ENCODE measurements at regions of chr3 and their contacts with region 1.

Region 1: GRCh38 chr3:4776980-4777581 is 202.2 kb upstream of the BHLHE40 start:
- DNase-seq: peak; percentile 80
- H3K4me3 Mint-ChIP-seq: peak overlapping the region; percentile 60
- H3K27ac Mint-ChIP-seq: peak overlapping the region; percentile 97
- H3K4me1 Mint-ChIP-seq: peaks cover 59% of the 10 kb centered on the region
- H3K27me3 Mint-ChIP-seq: no peaks in the 10 kb centered on the region

Region 2: DNA sequence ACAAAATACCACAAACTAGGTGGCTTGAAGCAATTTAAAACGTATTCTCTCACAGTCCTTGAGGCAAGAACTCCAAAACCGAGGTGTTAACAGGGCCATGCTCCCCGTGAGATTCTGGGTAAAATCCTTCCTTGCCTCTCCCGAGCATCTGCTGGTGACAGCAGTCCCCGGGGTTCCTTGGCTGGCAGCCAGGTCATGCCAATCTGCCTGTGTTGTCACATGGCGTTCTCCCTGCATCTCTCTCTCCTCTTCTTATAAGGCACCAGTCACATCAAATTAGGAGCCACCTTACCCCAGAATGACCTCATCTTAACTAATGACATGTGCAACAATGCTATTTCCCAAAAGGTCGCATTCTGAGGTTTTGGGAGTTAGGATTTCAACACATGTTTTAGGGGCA is 1004.2 kb before region 1 on chr3:
- intact Hi-C with region 1: no loop called
- DNase-seq: no peak
- H3K4me3 Mint-ChIP-seq: no peak overlapping the region
- H3K27ac Mint-ChIP-seq: no peak overlapping the region
- H3K4me1 Mint-ChIP-seq: no peaks in the 10 kb centered on the region
- H3K27me3 Mint-ChIP-seq: no peaks in the 10 kb centered on the region

Region 3: GRCh38 chr3:4387210-4388204 is 389.6 kb before region 1 on chr3:
- intact Hi-C with region 1: loop called (anchors 10 kb)
- DNase-seq: peak; percentile 48
- H3K4me3 Mint-ChIP-seq: peak overlapping the region; percentile 1
- H3K27ac Mint-ChIP-seq: peak overlapping the region; percentile 84
- H3K4me1 Mint-ChIP-seq: peaks cover 35% of the 10 kb centered on the region
- H3K27me3 Mint-ChIP-seq: no peaks in the 10 kb centered on the region

Region 4: GRCh38 chr3:4633078-4634004 is 143.7 kb before region 1 on chr3:
- intact Hi-C with region 1: no loop called
- DNase-seq: peak; percentile 71
- H3K4me3 Mint-ChIP-seq: no peak overlapping the region
- H3K27ac Mint-ChIP-seq: no peak overlapping the region
- H3K4me1 Mint-ChIP-seq: peaks cover 5% of the 10 kb centered on the region
- H3K27me3 Mint-ChIP-seq: no peaks in the 10 kb centered on the region

Region 5: GRCh38 chr3:4741404-4742307 is 35.4 kb before region 1 on chr3:
- intact Hi-C with region 1: loop called (anchors 1 kb)
- DNase-seq: peak; percentile 71
- H3K4me3 Mint-ChIP-seq: peak overlapping the region; percentile 47
- H3K27ac Mint-ChIP-seq: peak overlapping the region; percentile 89
- H3K4me1 Mint-ChIP-seq: peaks cover 66% of the 10 kb centered on the region
- H3K27me3 Mint-ChIP-seq: no peaks in the 10 kb centered on the region

Region 6: DNA sequence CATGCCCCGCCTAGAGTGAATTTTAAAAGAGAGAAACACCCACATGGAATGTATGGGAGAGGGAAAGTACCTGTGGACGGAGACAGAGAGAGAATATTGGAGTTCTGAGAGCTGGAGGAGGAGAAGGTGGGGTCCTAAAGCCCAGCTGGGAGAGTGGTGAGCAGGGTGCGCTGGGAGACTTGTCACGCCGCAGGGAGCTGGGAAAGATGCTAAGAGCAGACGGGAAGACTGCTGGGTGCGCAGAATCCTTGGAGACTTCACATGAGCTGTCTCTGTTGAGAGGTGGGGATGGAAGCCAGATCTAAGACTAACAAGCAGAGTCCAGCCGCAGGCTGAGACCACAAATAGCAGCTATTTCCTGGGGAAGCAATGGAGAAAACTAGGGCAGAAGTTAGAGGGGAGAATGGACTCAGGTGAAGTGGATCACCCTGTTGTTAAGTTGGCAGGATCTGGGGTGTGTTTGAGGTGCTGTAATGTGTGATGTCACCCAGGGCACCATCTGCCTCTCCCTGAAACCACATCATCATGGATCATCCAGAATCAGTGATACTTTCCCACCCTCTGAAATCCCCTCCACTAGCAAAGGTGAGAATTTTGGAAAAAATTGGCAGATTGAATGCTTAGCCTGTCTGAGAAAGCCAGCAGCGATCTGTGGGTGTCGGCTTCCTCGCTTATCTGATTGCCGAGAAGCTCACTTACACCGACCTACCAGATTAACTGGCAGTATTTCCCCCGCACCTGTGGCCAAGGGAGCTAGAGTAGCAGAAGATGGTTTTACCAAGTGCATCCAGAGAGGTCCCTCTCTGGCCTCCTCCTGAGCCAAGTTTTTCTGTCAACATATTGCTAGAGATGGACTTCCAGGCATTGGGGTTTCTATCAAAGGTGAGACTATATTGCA is 27.3 kb after region 1 on chr3:
- intact Hi-C with region 1: loop called (anchors 1 kb)
- DNase-seq: peak; percentile 64
- H3K4me3 Mint-ChIP-seq: peak overlapping the region; percentile 30
- H3K27ac Mint-ChIP-seq: peak overlapping the region; percentile 50
- H3K4me1 Mint-ChIP-seq: peaks cover 53% of the 10 kb centered on the region
- H3K27me3 Mint-ChIP-seq: no peaks in the 10 kb centered on the region

Region 7: DNA sequence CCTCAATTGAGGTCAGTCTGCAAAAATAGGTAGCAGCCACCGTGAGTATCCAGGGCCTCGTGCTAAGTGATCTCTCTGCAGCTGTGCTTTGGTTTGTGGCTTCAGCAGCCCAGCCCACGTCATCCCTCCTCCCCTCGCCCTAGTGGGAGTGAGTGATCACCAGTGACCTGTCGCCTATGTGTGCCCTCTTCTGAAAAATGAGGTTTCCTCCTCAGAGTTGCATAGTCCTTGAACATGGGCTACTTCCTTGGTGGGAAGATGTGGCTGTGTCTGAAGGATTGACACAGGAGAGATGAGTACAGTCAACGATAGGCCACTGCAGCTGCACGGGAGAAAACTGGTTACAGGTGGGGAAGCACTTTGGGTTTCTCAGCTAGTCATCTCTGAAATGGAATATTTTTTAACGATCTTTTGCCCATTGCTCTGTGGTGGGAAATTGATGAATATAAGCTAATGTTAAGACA is 57.4 kb after region 1 on chr3:
- intact Hi-C with region 1: loop called (anchors 1 kb)
- DNase-seq: peak; percentile 94
- H3K4me3 Mint-ChIP-seq: peak overlapping the region; percentile 81
- H3K27ac Mint-ChIP-seq: peak overlapping the region; percentile 97
- H3K4me1 Mint-ChIP-seq: peaks cover 83% of the 10 kb centered on the region
- H3K27me3 Mint-ChIP-seq: no peaks in the 10 kb centered on the region

Region 8: GRCh38 chr3:4906107-4906621 is 129.1 kb after region 1 on chr3:
- intact Hi-C with region 1: loop called (anchors 5 kb)
- DNase-seq: peak; percentile 71
- H3K4me3 Mint-ChIP-seq: peak overlapping the region; percentile 60
- H3K27ac Mint-ChIP-seq: peak overlapping the region; percentile 88
- H3K4me1 Mint-ChIP-seq: peaks cover 77% of the 10 kb centered on the region
- H3K27me3 Mint-ChIP-seq: no peaks in the 10 kb centered on the region

Region 9: DNA sequence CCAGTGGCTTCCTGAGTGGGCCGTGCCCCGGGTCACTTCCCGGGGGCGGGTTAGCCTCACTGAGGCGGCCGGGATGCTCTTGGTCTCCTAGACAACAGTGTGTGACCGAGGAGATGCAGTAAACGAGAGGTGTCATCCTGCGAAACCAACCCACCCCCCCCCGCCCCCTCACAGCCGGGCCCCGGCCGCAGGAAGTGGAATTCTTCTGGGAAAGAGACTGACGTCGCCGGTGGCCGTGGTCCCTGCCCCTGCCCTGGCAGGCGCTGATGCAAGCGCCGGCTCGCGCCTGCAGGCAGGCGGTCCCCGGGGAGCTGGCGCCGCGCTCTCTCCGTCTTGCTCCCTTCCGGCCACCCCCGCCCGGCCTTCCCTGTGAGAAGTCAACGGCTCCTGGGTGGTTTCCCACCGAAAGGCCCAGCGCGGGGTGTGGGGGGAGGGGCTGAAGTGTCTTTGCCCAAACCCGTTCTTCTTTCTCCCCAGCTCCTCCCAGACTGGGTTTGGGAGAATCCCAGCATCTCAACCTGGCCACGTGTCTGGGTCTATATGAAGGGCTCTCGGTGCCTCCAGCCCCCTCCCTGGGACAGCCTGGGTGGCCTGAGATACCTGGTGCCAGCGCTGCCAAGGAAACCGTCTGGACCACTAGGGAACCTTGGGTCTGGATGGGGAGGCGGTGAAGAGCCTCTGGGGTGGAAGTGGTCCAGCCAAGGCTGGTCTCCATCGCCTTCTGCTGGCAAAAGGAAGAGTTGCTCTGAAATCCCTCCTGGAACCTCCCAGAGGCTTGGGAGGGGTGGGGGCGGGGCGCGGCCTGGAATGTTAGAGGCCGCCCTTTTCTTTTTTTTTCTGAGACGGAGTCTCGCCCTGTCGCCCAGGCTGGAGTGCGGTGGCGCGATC is 249.5 kb after region 1 on chr3:
- intact Hi-C with region 1: loop called (anchors 1 kb)
- DNase-seq: peak; percentile 90
- H3K4me3 Mint-ChIP-seq: peak overlapping the region; percentile 87
- H3K27ac Mint-ChIP-seq: peak overlapping the region; percentile 93
- H3K4me1 Mint-ChIP-seq: peaks cover 49% of the 10 kb centered on the region
- H3K27me3 Mint-ChIP-seq: no peaks in the 10 kb centered on the region

Measured in activated CD4-positive, alpha-beta T cell treated with anti-CD3 and anti-CD28 coated beads, Interleukin-2, amount 10 ng/mL, durations not matched to agents 24 days and 14 days (primary cell).